AG04450 (cell line): ENCODE measurements at regions of chr13 and their contacts with region 1.

Region 1: GRCh38 chr13:36858290-36858689 is 39.3 kb downstream of the RFXAP start:
- DNase-seq: peak; percentile 15
- H3K4me3 ChIP-seq: no peak overlapping the region
- H3K27ac ChIP-seq: no peak overlapping the region
- H3K27me3 ChIP-seq: no peaks in the 10 kb centered on the region
- CTCF ChIP-seq: peak; percentile 66

Region 2: GRCh38 chr13:36834299-36834698 is 24.0 kb before region 1 on chr13:
- CTCF ChIA-PET with region 1: interaction called, 11 read pairs
- POLR2A ChIA-PET with region 1: no interaction called
- DNase-seq: no peak
- H3K4me3 ChIP-seq: no peak overlapping the region
- H3K27ac ChIP-seq: no peak overlapping the region
- H3K27me3 ChIP-seq: no peaks in the 10 kb centered on the region
- CTCF ChIP-seq: no peak

Region 3: DNA sequence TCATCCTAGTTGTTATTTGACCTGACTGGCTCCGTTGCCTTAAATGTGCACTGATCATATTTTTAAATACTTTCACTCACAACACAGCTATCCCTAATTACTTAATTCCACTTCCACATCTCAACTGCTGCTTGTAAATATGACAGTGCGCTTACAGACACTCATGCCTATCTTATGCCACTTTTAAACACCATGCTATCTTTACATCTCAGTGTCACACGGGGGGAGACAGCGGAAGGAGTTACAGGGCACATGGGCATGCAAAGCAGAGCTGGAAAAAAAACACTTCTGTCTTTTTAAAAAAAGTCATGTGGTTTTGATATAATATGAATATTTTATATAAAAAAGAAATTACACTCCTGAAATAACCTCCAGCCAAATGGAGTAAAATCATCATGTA is 17.7 kb after region 1 on chr13:
- CTCF ChIA-PET with region 1: interaction called, 39 read pairs
- POLR2A ChIA-PET with region 1: no interaction called
- DNase-seq: no peak
- H3K4me3 ChIP-seq: no peak overlapping the region
- H3K27ac ChIP-seq: no peak overlapping the region
- H3K27me3 ChIP-seq: no peaks in the 10 kb centered on the region
- CTCF ChIP-seq: no peak

Region 4: DNA sequence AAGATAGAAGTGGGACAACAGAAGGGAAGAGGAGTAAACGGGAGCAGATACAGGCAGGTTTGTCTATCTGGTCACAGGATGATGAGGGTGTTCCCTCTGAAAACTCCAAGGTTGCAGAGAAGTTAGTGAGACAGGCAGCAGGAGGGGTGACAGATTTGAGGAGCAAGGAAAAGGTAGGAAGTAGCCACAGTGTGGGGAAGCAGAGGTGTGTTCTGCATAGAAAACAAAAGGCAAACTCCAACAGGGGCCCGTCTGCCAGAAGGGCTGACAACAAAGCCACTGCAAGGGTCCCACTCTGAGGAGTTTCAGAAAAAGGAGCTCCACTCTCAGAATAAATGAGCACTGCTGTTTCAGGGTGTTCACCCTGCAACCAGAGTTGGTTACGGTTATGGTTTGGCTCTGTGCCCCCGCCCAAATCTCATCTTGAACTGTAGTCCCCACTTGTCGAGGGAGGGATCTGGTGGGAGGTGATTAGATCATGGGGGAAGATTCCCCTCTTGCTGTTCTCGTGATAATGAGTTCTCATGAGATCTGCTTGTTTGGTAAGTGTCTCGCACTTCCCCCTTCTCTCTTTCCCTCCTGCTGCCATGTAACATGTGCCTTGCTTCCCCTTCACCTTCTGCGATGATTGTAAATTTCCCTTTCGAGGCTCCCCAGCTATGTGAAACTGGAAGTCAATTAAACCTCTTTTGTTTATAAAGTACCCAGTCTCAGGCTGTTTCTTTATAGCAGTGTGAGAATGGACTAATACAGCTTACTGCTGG is 29.6 kb after region 1 on chr13:
- CTCF ChIA-PET with region 1: interaction called, 11 read pairs
- POLR2A ChIA-PET with region 1: no interaction called
- DNase-seq: no peak
- H3K4me3 ChIP-seq: no peak overlapping the region
- H3K27ac ChIP-seq: no peak overlapping the region
- H3K27me3 ChIP-seq: no peaks in the 10 kb centered on the region
- CTCF ChIP-seq: no peak

Region 5: DNA sequence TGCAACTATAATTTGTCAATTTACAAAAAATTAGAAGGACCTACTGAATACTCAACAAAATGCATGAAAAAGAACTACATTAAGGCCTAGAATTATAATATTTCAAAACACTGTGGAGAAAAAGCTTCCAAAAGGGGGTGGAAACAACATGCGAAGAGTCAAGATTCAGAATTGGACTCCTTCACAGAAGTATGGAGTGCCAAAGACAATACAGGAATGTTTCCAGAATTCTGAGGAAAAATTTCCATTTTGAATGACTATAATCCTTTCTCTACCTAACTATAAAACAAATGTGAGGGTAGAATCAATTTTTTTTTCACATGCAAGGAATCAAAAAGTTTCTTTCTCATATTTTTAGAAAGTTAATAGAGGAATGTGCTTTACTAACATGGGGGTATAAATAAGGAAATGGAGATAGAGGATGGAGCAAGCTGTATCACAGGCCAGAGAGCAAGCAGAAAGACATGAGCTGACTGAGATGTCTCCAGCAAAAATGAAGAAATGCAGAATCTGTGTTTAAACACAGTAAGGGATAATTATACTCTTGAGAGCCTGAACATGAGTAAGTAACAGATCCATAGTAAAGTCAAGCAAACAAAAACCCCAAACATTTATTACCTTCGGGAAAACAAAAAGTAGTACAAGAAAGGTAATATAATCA is 101.3 kb after region 1 on chr13:
- CTCF ChIA-PET with region 1: interaction called, 11 read pairs
- POLR2A ChIA-PET with region 1: no interaction called
- DNase-seq: no peak
- H3K4me3 ChIP-seq: no peak overlapping the region
- H3K27ac ChIP-seq: no peak overlapping the region
- H3K27me3 ChIP-seq: no peaks in the 10 kb centered on the region
- CTCF ChIP-seq: no peak

Region 6: GRCh38 chr13:36973621-36974295 is 115.5 kb after region 1 on chr13:
- CTCF ChIA-PET with region 1: interaction called, 432 read pairs
- POLR2A ChIA-PET with region 1: interaction called, 3 read pairs
- DNase-seq: no peak
- H3K4me3 ChIP-seq: no peak overlapping the region
- H3K27ac ChIP-seq: no peak overlapping the region
- H3K27me3 ChIP-seq: no peaks in the 10 kb centered on the region
- CTCF ChIP-seq: no peak

Region 7: DNA sequence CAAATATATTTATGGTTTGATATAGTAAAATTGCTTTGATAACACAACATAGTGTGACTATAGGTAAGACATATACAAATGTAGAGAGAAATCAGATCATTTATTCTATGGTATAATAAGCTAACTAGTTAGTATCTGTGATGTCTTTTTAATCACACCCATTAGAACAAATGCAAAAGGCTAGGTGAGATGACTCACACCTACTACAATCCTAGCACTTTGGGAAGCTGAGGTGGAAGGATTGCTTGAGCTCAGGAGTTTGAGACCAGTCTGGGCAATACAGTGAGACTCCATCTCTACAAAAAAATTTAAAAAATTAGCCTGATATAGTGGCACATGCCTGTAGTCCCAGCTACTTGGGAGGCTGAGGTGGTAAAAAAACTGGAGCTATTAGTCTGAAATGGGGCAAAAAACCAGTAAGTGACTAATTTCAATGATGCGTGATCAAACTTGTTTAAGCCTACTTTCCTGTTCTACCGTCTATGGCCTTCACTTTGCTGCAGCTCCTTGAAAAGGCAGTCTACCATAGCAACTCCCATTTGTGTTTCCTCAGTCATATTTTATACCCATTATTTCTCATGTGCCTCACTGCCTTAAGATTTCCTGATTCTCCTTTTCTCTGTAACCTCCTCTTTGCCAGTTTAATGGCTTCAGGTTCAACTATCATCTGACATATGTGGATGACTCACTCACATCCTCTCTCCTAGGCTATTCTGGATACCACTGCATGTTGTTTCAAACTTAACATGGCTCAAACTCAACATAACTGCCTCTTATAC is 128.4 kb after region 1 on chr13:
- CTCF ChIA-PET with region 1: interaction called, 432 read pairs
- POLR2A ChIA-PET with region 1: no interaction called
- DNase-seq: no peak
- H3K4me3 ChIP-seq: no peak overlapping the region
- H3K27ac ChIP-seq: no peak overlapping the region
- H3K27me3 ChIP-seq: no peaks in the 10 kb centered on the region
- CTCF ChIP-seq: no peak